GM12878 (cell line): ENCODE measurements at regions of chr19 and their contacts with region 1.

Region 1: GRCh38 chr19:23686621-23687423 is at the start of gene ZNF675:
- DNase-seq: peak; percentile 77
- ATAC-seq: peak; percentile 98
- H3K4me3 ChIP-seq: peak within 1 kb of the TSS; percentile 82
- H3K27ac ChIP-seq: peak within 1 kb of the TSS; percentile 79
- H3K4me1 ChIP-seq: no peaks in the 10 kb centered on the region
- H3K27me3 ChIP-seq: no peaks in the 10 kb centered on the region
- CTCF ChIP-seq: no peak
- EP300 ChIP-seq: no peak
- POLR2A ChIP-seq: peak; percentile 89
- RAD21 ChIP-seq: no peak
- polyA plus RNA-seq, gene ZNF675: 9.1 to 11.6 TPM

Region 2: GRCh38 chr19:21767065-21767800 is 1919.6 kb before region 1 on chr19 and contains the start of gene ZNF100:
- CTCF ChIA-PET with region 1: no interaction called
- POLR2A ChIA-PET with region 1: no interaction called
- RAD21 ChIA-PET with region 1: no interaction called
- SMC1A ChIA-PET with region 1: no interaction called
- in situ Hi-C with region 1: loop called (anchors 10 kb)
- intact Hi-C with region 1: no loop called
- DNase-seq: peak; percentile 79
- ATAC-seq: peak; percentile 98
- H3K4me3 ChIP-seq: peak within 1 kb of the TSS; percentile 84
- H3K27ac ChIP-seq: peak within 1 kb of the TSS; percentile 90
- H3K4me1 ChIP-seq: no peaks in the 10 kb centered on the region
- H3K27me3 ChIP-seq: no peaks in the 10 kb centered on the region
- CTCF ChIP-seq: no peak
- EP300 ChIP-seq: no peak
- POLR2A ChIP-seq: peak; percentile 86
- RAD21 ChIP-seq: no peak
- polyA plus RNA-seq, gene ZNF100: 3.0 to 3.4 TPM

Region 3: GRCh38 chr19:23395041-23395721 is 291.6 kb before region 1 on chr19 and contains the start of gene ZNF91:
- CTCF ChIA-PET with region 1: no interaction called
- POLR2A ChIA-PET with region 1: no interaction called
- RAD21 ChIA-PET with region 1: no interaction called
- SMC1A ChIA-PET with region 1: no interaction called
- in situ Hi-C with region 1: loop called (anchors 10 kb)
- intact Hi-C with region 1: no loop called
- DNase-seq: peak; percentile 85
- ATAC-seq: peak; percentile 97
- H3K4me3 ChIP-seq: peak within 1 kb of the TSS; percentile 77
- H3K27ac ChIP-seq: peak within 1 kb of the TSS; percentile 96
- H3K4me1 ChIP-seq: no peaks in the 10 kb centered on the region
- H3K27me3 ChIP-seq: no peaks in the 10 kb centered on the region
- CTCF ChIP-seq: no peak
- EP300 ChIP-seq: no peak
- POLR2A ChIP-seq: peak; percentile 96
- RAD21 ChIP-seq: no peak
- polyA plus RNA-seq, gene ZNF91: 4.6 to 5.1 TPM

Region 4: GRCh38 chr19:23787106-23787505 is 100.3 kb after region 1 on chr19:
- CTCF ChIA-PET with region 1: no interaction called
- POLR2A ChIA-PET with region 1: no interaction called
- RAD21 ChIA-PET with region 1: no interaction called
- SMC1A ChIA-PET with region 1: no interaction called
- in situ Hi-C with region 1: no loop called
- intact Hi-C with region 1: no loop called
- DNase-seq: no peak
- ATAC-seq: no peak
- H3K4me3 ChIP-seq: no peak overlapping the region
- H3K27ac ChIP-seq: no peak overlapping the region
- H3K4me1 ChIP-seq: no peaks in the 10 kb centered on the region
- H3K27me3 ChIP-seq: no peaks in the 10 kb centered on the region
- CTCF ChIP-seq: no peak
- EP300 ChIP-seq: no peak
- POLR2A ChIP-seq: no peak
- RAD21 ChIP-seq: no peak

Region 5: GRCh38 chr19:24099829-24100228 is 413.0 kb after region 1 on chr19:
- CTCF ChIA-PET with region 1: no interaction called
- POLR2A ChIA-PET with region 1: no interaction called
- RAD21 ChIA-PET with region 1: no interaction called
- SMC1A ChIA-PET with region 1: no interaction called
- in situ Hi-C with region 1: loop called (anchors 10 kb)
- intact Hi-C with region 1: no loop called
- DNase-seq: no peak
- ATAC-seq: no peak
- H3K4me3 ChIP-seq: no peak overlapping the region
- H3K27ac ChIP-seq: no peak overlapping the region
- H3K4me1 ChIP-seq: no peaks in the 10 kb centered on the region
- H3K27me3 ChIP-seq: no peaks in the 10 kb centered on the region
- CTCF ChIP-seq: no peak
- EP300 ChIP-seq: no peak
- POLR2A ChIP-seq: no peak
- RAD21 ChIP-seq: no peak